ENCODE measurements at regions of chr21 and their contacts with region 1.

Region 1: DNA sequence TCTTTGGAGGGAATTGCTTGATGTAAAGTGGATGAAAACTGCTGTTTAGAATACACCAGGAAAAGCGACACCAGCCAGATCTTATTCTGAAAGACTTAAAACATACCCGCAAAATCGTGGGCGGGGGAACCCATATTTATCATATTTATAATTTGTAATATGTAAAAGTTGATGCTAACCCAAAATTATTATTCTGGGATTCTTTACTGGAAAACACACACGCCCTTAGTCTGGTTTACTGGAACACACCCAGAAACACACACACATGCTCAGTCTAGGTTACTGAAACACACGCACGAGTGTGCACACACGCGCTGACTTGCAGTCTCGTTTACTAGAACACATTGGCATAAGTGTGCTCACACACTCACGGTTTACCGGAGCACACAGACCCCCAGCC is 32.5 kb downstream of the ATP5PO start:
- DNase-seq: no peak
- ATAC-seq: no peak
- H3K4me3 ChIP-seq: no peak overlapping the region
- H3K27ac ChIP-seq: no peak overlapping the region
- H3K4me1 ChIP-seq: no peaks in the 10 kb centered on the region; the same call in 1 of the 2 replicates
- H3K27me3 ChIP-seq: no peaks in the 10 kb centered on the region
- CTCF ChIP-seq: no peak

Region 2: GRCh38 chr21:33894736-33895288 is 11.7 kb after region 1 on chr21:
- CTCF ChIA-PET with region 1: no interaction called
- POLR2A ChIA-PET with region 1: no interaction called
- in situ Hi-C with region 1: no loop called
- intact Hi-C with region 1: no loop called
- DNase-seq: no peak
- ATAC-seq: peak; percentile 96
- H3K4me3 ChIP-seq: peak overlapping the region; percentile 7 to 33; a peak in 3 of 4 replicates
- H3K27ac ChIP-seq: peak overlapping the region; percentile 48; the same call in 1 of the 2 replicates
- H3K4me1 ChIP-seq: no peaks in the 10 kb centered on the region; the same call in 1 of the 2 replicates
- H3K27me3 ChIP-seq: no peaks in the 10 kb centered on the region
- CTCF ChIP-seq: peak; percentile 75

Region 3: DNA sequence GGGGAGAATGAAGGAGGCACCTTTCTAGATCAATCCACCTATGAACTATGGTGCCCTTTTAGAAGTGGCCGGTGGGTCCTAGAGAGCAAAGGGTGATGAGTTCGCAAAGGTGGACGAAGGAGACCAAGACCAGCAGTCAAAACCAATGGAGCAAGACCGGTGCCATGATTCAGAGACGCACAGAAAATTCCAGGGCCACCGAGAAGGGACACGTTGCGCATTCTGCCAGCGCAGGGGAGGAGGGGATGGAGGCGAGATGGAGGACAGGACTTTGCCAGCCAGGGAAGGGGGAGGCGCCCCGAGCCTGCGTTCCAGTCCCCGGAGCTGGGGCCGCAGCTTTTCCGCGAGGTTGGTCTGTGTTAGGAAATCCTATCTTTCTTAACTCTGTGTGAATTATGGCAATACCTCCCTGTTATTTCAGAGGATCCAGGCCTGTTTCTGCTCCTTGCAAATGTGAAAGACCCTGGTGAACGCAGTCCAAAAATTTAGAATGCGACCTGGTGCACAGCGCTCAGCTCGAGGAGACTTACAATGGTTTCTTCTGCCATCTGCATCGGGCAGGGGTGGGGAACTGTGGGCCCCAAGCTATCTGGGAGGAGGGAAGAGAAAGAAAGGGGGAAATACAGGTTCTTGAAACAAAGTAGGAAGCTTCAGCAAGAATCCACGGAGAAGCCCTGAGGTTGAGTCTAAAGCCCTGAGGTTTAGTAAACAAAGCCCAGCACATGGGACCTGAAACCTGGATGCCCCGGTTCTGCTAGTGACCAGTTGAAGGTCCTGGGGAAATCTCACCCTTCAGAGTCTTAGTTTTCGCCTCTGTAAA is 319.6 kb after region 1 on chr21:
- CTCF ChIA-PET with region 1: no interaction called
- POLR2A ChIA-PET with region 1: interaction called, 10 read pairs
- in situ Hi-C with region 1: no loop called
- intact Hi-C with region 1: no loop called
- DNase-seq: no peak
- ATAC-seq: no peak; the same call in 1 of the 2 replicates
- H3K4me3 ChIP-seq: peak overlapping the region; percentile 34 to 61; a peak in 3 of 4 replicates
- H3K27ac ChIP-seq: peak overlapping the region; percentile 91
- H3K4me1 ChIP-seq: peaks cover 51% of the 10 kb centered on the region
- H3K27me3 ChIP-seq: no peaks in the 10 kb centered on the region
- CTCF ChIP-seq: no peak

Measured in Panc1 (cell line).